ENCODE measurements at regions of chr14 and their contacts with region 1.

Region 1: DNA sequence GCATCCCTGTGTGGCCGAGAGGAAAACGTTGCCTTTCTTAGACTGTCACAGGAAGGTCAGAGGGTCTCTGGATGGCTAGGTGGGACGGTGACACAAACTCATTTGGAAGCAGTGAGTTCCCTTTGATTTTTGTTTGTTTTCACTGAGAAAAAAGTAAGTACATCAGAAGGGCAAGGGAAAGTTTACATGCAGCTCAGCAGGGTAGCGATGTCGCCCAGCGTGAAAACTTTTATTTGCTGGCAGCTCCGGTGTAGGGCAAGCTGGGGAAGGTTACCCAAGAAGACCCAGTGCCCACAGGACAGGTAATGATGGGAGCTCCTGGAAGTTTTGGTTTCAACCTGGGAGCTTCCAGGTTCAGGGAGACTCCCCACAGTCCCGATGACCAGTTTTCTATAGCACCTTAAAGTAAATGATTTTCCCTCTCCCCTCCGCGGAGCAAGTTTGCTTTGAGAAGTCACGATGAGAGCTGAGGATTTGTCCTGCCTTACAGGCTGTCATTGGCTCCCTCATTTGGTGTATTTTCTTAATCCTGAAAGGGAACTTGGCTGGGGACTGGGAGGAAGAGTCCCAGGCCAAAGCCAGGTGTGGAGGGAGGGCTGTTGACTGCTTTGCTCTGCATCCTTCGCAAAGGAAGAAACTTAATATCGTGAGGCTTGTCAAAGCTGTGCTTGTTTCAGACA is 64.7 kb upstream of the ESRRB start:
- DNase-seq: peak; percentile 51

Region 2: GRCh38 chr14:75769047-75769685 is 542.1 kb before region 1 on chr14:
- intact Hi-C with region 1: no loop called
- DNase-seq: no peak

Region 3: DNA sequence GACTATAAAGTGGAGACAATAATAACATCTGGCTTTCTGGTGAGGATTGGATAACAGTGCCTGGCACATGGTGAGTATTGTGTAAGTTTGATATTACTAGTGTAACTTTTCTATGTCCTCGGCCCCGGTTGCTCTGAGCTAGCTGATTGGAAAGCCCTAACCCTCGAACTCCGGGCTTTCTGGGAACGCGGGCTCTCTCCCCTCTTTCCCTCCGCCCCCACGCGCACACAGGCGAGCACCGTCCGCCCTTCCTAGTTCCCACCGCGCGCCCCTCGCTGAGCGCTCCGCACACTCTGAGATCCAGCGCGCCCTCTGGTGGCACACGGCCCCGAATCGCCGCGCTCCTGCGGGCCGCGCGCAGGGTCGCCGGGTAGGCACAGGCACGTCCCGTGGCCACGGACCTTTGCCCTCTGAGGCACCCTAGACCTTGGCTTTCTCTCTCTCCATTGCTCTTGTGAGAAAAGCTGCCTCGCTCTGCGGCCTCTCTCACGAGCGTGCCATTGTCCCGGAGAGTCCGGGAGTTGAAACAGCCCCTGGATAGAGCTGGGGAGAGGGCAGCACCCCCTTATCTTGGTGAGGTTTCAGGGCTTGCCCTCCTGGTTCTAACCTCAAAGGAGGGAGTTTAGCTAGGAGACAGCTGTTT is 41.5 kb after region 1 on chr14:
- intact Hi-C with region 1: loop called (anchors 2 kb)
- DNase-seq: peak; percentile 70